Uterus (tissue), 4 donors: ENCODE measurements at regions of chr1 and their contacts with region 1.

Region 1: DNA sequence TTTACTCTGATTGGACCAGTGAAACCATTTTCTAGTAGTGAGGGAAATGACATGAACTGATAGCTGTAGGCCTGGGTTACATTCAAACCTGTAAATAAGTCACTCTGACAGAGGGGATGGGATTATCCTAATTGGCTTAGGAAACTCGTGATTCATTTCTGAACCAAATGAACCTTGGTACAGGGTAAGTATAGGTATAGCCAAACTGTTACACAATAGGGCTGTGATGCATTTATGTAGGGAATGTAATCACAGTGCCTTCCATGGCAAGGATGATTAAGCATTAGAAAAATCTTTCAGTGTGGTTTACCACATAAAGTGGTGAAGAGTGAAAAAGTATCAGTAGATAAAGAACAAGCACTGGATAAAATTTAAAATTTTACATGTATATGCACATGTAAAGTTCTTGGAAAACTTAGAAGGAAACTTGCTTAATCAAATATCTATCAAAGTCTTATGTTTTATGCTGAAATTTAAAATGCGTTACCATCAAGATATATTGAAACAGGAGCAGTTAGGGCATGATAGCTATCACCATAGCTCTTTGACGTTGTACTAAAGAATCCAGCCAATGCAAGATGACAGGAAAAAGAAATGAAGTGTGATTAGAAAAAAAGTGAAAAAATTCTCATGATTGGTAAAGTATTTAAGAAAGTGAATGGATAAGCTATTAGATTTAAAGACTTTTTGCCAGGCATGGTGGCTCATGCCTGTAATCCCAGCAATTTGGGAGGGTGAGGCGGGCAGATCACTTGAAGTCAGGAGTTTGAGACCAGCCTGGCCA is 63.0 kb downstream of the RABGAP1L start:
- DNase-seq: no peak
- H3K4me3 ChIP-seq: no peak overlapping the region
- H3K27ac ChIP-seq: no peak overlapping the region
- H3K4me1 ChIP-seq: peaks cover 0 to 5% of the 10 kb centered on the region in 2 donors
- H3K27me3 ChIP-seq: no peaks in the 10 kb centered on the region
- CTCF ChIP-seq: no peak
- POLR2A ChIP-seq: no peak

Region 2: DNA sequence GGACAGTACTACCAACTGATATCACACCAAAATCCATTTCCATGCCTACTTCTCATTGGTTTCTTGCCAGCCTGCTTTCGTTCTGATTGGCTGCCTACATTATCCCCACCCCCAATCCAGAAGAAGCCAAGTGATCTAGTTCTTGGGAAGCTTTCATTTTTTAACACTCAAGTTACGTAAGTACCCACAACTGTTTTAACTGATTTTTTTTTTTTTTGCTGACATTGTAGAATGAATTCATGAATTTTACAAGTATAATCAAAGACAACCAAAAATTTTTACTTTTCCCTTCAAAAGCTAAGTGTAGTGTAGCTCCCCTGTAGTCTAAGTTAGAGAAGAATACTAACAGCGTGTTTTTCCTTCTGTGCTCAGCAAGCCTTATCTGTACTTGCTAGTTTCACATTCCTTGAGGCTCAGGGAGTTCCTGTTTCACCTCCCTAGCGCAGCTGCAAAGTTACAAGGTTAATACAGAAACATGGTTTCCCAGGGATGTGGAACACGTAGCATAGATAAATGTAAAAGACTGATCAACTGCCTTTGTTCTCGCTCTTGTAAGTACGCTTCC is 619.2 kb before region 1 on chr1 and contains the start of gene SLC9C2:
- intact Hi-C with region 1: loop called (anchors 10 kb)
- DNase-seq: no peak
- H3K4me3 ChIP-seq: peak within 1 kb of the TSS; percentile 20 to 32
- H3K27ac ChIP-seq: peak within 1 kb of the TSS; percentile 8 to 27
- H3K4me1 ChIP-seq: no peaks in the 10 kb centered on the region
- H3K27me3 ChIP-seq: no peaks in the 10 kb centered on the region
- CTCF ChIP-seq: no peak
- POLR2A ChIP-seq: no peak
- total RNA-seq, gene SLC9C2: 0.83 TPM in 1 of 4 donors, not detected in the others

Region 3: GRCh38 chr1:174165471-174166137 is 56.8 kb before region 1 on chr1:
- intact Hi-C with region 1: no loop called
- DNase-seq: no peak
- H3K4me3 ChIP-seq: no peak overlapping the region
- H3K27ac ChIP-seq: no peak overlapping the region
- H3K4me1 ChIP-seq: no peaks in the 10 kb centered on the region
- H3K27me3 ChIP-seq: no peaks in the 10 kb centered on the region
- CTCF ChIP-seq: no peak
- POLR2A ChIP-seq: no peak

Region 4: DNA sequence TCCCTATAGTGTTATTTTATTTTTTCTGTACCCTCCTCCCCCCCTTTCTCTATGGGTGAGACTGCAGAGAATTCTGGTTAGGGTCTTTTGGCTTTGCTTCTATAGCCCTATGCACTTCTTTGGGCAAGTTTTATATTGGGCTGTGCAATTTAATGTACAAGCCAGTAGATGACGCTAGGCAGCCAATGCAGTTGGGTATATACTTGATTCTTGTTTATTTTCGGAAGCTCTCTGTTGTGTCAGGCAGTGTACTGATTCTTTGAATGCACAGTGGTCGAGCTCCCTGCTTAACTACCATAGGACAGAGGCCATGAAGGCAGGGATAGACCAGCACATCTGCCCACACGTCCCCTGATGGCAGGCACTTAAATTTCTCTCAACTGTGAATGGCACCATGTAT is 191.3 kb after region 1 on chr1:
- intact Hi-C with region 1: no loop called
- DNase-seq: no peak
- H3K4me3 ChIP-seq: no peak overlapping the region
- H3K27ac ChIP-seq: no peak overlapping the region
- H3K4me1 ChIP-seq: no peaks in the 10 kb centered on the region
- H3K27me3 ChIP-seq: no peaks in the 10 kb centered on the region
- CTCF ChIP-seq: peak in 1 of 4 experiments; percentile 25
- POLR2A ChIP-seq: no peak